SK-N-SH (cell line): ENCODE measurements at regions of chr12 and their contacts with region 1.

Region 1: DNA sequence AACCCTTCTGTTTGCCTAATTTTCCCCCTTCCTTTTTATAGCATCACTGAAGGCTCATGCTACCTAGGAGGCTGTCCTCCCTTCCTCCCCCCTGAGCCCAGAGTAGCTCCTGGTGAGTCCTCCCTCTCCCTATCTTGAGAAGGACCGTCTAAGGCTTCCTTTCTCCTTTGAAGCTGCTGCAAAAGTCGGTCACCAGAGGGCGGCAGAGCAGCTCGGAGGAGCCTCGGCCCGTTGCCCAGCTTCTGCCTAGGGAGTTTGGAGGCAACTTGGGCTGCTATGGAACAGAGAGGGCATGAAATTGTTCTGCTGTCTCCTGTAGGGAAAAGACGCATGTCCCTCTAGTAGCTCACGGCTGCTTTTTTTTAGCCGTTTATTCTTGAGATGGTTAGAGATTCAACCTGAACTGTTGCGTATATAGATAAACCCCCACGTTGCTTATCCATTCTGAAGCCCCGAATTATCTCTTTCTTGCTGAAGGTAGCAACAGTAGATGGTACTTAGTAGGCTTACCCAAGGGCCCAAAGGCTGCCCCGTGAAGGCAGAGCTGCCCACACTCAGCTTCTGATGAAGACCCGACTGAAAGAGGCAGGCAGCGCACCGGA is 5.7 kb downstream of the WNT5B start:
- DNase-seq: peak; percentile 83
- H3K4me3 ChIP-seq: peak overlapping the region in 1 of 2 experiments; percentile 37; a peak in 1 of 4 replicates
- H3K27ac ChIP-seq: no peak overlapping the region
- H3K4me1 ChIP-seq: peaks cover 0 to 10% of the 10 kb centered on the region in 2 experiments; a peak in 2 of 4 replicates
- H3K27me3 ChIP-seq: no peaks in the 10 kb centered on the region
- CTCF ChIP-seq: peak; percentile 84
- EP300 ChIP-seq: no peak
- RAD21 ChIP-seq: peak; percentile 84

Region 2: DNA sequence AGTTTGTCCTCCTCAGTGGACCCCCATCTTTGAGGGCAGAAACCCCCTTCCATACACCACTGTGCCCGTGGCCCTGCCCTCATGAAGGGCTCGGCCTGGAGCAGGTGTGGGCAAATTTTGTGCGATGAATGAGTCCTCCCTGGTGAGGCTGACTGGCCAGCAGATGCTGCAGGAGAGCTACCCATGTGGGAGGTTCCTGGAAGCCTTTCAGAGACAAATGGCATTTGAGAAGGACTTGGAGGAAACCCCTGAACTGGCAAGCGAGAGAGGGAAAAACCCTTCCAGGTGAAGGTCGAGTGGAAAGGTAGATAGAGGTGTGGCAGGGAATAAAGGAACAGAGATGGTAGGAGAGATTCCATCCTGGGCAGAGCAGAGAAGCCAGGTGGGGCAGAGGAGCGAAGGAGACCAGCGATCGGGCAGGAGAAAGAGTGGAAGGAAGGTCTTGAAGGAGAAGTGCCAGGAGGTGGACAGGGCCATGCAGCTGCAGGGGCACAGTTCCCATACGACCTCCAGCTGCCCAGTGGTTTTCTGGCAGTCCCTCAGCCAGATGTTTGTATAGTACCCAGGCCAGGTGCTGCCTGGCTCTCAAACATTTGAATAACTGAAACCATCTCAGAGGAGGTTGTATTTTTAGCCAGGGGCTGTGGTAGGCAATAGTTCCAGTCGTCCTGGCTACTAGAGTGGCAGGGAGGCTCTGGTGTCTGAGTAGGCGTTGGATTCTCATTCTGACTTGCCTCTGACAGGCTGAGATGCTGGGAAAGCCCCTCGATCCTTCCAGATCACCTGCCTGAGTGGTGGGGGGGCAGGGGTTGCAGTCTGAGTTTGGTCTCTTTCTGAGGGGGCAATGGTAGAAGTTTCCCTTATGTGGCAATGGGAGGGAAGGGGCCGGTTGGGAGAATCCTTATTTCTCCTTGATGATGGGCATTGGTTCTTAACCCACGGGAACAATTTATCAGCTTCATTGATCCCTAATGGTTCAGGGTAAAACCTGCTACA is 80.4 kb before region 1 on chr12:
- CTCF ChIA-PET with region 1: no interaction called
- POLR2A ChIA-PET with region 1: no interaction called
- DNase-seq: no peak
- H3K4me3 ChIP-seq: no peak overlapping the region
- H3K27ac ChIP-seq: no peak overlapping the region
- H3K4me1 ChIP-seq: no peaks in the 10 kb centered on the region; a peak in 1 of 4 replicates
- H3K27me3 ChIP-seq: no peaks in the 10 kb centered on the region
- CTCF ChIP-seq: no peak
- EP300 ChIP-seq: no peak
- RAD21 ChIP-seq: no peak

Region 3: DNA sequence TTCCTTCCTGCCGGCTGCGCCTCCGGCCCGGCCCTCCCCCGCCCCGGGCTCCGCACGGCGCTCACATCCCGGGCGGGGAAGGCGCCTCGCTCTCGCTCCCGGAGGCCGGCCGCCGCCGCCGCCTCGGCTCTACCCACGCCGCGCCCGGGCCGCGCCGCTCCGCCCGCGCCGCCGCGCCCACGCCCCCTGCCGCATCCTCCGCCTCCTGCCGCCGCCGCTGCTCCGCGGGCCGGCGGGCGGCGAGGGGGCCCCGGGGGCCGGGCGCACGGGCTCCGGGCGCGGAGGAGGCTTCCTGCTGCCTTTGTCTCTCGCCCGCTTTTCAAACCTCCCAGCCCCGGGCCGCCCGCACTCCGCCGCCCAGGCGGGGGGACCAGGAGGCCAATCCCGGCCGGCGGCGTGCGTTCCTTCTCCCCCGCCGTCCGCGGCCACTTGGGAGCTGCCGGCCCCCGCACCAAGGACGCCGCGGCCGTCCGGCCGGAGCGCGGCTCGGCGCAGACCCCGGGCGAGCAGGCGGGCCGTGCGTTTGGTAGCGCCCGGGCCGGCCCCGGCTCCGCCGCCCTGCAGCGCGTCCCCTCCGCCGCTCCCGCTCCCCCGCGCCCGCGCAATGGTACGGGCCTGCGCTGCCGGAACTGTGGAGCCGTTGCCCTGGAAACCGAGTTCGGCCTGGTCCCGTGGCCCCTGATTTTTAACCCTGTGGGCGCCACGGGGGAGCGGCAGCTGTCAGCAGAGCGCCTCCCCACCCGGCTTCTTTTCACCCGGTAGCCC is 40.2 kb before region 1 on chr12 and contains the start of gene FBXL14:
- CTCF ChIA-PET with region 1: interaction called, 21 read pairs
- POLR2A ChIA-PET with region 1: interaction called, 11 read pairs
- DNase-seq: peak; percentile 92
- H3K4me3 ChIP-seq: peak within 1 kb of the TSS; percentile 76 to 80
- H3K27ac ChIP-seq: peak within 1 kb of the TSS; percentile 65 to 95
- H3K4me1 ChIP-seq: peaks cover 30 to 33% of the 10 kb centered on the region in 2 experiments
- H3K27me3 ChIP-seq: no peaks in the 10 kb centered on the region
- CTCF ChIP-seq: no peak
- EP300 ChIP-seq: no peak
- RAD21 ChIP-seq: no peak
- polyA plus RNA-seq, gene FBXL14: 11.3 and 12.8 TPM in 2 replicates

Region 4: GRCh38 chr12:1605129-1606020 is 29.3 kb before region 1 on chr12:
- CTCF ChIA-PET with region 1: interaction called, 30 read pairs
- POLR2A ChIA-PET with region 1: interaction called, 5 read pairs
- DNase-seq: peak; percentile 79
- H3K4me3 ChIP-seq: peak overlapping the region; percentile 29 to 64
- H3K27ac ChIP-seq: peak overlapping the region; percentile 64 to 92
- H3K4me1 ChIP-seq: peaks cover 9 to 33% of the 10 kb centered on the region in 2 experiments; a peak in 3 of 4 replicates
- H3K27me3 ChIP-seq: no peaks in the 10 kb centered on the region
- CTCF ChIP-seq: peak; percentile 80
- EP300 ChIP-seq: 0 out of 4 replicates have a peak, but pooled peaks of 1 of the 2 experiments have one; percentile 27
- RAD21 ChIP-seq: peak; percentile 87

Region 5: GRCh38 chr12:1644534-1645438 is 10.1 kb after region 1 on chr12:
- CTCF ChIA-PET with region 1: interaction called, 110 read pairs
- POLR2A ChIA-PET with region 1: interaction called, 8 read pairs
- DNase-seq: peak; percentile 88
- H3K4me3 ChIP-seq: no peak overlapping the region
- H3K27ac ChIP-seq: peak overlapping the region; percentile 56 to 89
- H3K4me1 ChIP-seq: peaks cover 15 to 29% of the 10 kb centered on the region in 2 experiments
- H3K27me3 ChIP-seq: no peaks in the 10 kb centered on the region
- CTCF ChIP-seq: no peak
- EP300 ChIP-seq: 0 out of 4 replicates have a peak, but pooled peaks of 1 of the 2 experiments have one; percentile 32
- RAD21 ChIP-seq: no peak; the same call in 1 of the 2 replicates

Region 6: GRCh38 chr12:1661553-1662335 is 27.1 kb after region 1 on chr12:
- CTCF ChIA-PET with region 1: interaction called, 15 read pairs
- POLR2A ChIA-PET with region 1: no interaction called
- DNase-seq: peak; percentile 93
- H3K4me3 ChIP-seq: peak overlapping the region; percentile 52 to 58; a peak in 3 of 4 replicates
- H3K27ac ChIP-seq: peak overlapping the region in 1 of 2 experiments; percentile 67; a peak in 2 of 4 replicates
- H3K4me1 ChIP-seq: peaks cover 0 to 2% of the 10 kb centered on the region in 2 experiments; a peak in 1 of 4 replicates
- H3K27me3 ChIP-seq: no peaks in the 10 kb centered on the region
- CTCF ChIP-seq: no peak
- EP300 ChIP-seq: peak in 1 of 2 experiments; percentile 22; a peak in 1 of 4 replicates
- RAD21 ChIP-seq: no peak